Pancreas (tissue), 10 donors: ENCODE measurements at regions of chr12 and their contacts with region 1.

Region 1: DNA sequence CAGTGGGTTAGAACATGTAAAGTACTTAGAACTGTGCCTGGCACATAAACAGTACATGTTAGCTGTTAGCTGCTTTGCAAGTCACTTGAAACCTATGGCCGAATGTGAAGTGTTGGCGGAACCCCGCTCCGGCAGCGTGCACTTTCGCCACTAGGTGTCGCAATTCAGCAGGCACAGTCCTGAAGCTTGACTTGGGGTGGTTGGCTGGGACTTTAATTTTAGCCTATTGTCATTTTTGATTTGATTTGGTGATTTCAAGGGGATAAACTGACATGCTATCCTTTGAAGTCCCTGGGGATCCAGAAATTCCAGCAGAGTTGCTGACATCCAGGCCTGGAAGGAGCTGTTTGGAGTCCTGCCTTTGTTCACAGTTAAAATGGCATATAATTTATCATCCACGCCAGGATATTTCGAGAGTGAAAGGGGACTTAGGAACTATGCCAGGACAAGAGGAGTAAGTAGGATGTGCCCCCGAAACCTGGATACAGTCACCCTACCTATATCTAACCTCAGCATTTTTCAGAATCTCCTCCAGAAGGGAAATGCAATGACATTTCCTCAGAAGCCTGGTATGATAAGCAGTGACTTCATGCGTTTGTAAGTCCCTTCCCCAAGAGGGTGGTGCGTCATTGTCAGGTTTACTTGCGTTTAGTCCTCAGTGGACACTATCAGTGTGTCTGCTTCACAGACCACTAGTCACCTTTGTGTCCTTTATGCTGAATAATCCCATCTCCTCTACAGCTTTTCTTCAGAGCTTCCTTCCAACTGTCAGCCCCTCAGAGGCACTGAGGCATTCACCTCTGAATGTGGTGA is 3.5 kb upstream of the TSPAN9 start:
- DNase-seq: peak; percentile 71 to 96 (median 87)
- ATAC-seq: peak; percentile 22 to 59 (median 51)
- H3K4me3 ChIP-seq: no peak overlapping the region
- H3K27ac ChIP-seq: no peak overlapping the region
- H3K4me1 ChIP-seq: peaks cover 0 to 10% (median 5%) of the 10 kb centered on the region in 3 donors
- H3K27me3 ChIP-seq: no peaks in the 10 kb centered on the region
- CTCF ChIP-seq: peak; percentile 97 to 99 (median 98)

Region 2: DNA sequence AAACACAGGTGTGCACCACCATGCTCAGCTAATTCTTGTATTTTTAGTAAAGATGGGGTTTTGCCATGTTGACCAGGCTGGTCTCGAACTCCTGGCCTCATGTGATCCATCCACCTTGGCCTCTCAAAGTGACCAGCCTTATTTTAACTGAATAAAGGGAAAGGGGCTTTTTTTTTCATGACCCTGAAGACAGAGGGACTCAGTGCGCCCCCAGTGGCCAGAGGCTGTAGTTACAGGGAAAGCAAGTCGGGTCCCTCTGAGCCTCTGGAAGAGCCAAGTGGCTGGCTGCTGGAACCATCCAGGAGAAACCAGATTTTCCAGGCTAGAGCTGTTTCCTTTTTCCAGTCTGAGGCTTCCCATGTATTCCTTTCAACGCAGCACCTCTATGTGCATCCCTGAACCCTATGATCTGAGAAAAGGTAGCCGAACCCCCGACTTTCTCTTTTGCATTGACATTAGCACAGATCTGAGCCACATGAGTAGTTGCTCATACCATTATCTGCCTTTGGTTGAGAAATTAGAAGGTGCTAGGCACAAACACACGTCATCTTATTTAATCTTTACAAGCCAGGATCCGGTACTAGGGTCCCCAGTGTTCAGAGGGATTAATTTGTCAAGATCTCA is 678.2 kb before region 1 on chr12:
- intact Hi-C with region 1: no loop called
- DNase-seq: peak in 3 of 6 donors; percentile 24 to 77 (median 44)
- ATAC-seq: peak in 3 of 4 donors; percentile 49 to 79 (median 66)
- H3K4me3 ChIP-seq: no peak overlapping the region
- H3K27ac ChIP-seq: no peak overlapping the region
- H3K4me1 ChIP-seq: no peaks in the 10 kb centered on the region
- H3K27me3 ChIP-seq: no peaks in the 10 kb centered on the region
- CTCF ChIP-seq: peak; percentile 51 to 72 (median 62)

Region 3: DNA sequence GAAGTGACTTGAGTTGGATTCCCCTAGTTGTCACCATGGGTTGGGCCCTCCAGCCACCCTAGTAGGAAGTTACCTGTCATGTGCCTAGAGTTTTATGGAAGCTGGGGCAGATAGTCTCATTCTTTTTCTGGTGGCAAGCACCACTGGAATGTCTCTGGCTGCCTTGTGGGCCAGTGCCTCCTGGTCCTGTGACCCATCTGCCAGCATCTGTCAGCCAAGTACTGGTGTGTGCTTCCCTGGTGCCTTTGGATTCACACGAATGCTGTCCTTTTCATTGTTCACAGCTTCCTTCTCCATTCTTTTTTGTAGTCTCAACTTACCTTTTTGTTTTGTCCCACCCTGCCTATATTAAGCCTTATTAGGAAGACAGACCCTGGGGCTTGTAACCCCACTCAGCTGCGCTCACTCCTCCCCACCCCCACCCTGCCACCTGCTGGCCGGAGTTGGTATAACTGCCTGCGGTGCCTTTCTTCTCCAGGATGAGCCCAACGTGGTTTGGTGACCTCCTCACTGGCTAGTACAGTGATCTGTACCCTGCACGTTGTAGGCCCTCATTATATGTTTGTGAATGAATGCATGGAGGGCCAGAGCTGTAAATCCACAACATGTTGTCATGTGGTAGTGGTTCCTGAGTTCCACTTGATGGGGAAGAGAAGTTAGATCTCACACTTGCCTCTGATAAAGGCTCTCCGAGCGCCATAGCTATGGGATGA is 129.2 kb after region 1 on chr12:
- intact Hi-C with region 1: loop called in 1 of 3 experiments (anchors 10 kb)
- DNase-seq: peak in 4 of 6 donors; percentile 56 to 90 (median 62)
- ATAC-seq: peak in 3 of 4 donors; percentile 38 to 51 (median 46)
- H3K4me3 ChIP-seq: no peak overlapping the region
- H3K27ac ChIP-seq: no peak overlapping the region
- H3K4me1 ChIP-seq: peaks cover 5 to 17% (median 12%) of the 10 kb centered on the region in 3 donors
- H3K27me3 ChIP-seq: no peaks in the 10 kb centered on the region
- CTCF ChIP-seq: peak; percentile 57 to 90 (median 86)

Region 4: GRCh38 chr12:3275171-3276041 is 201.8 kb after region 1 on chr12:
- intact Hi-C with region 1: loop called in 2 of 3 experiments (anchors 5 to 10 kb)
- DNase-seq: peak in 5 of 6 donors; percentile 35 to 95 (median 77)
- ATAC-seq: peak; percentile 72 to 91 (median 89)
- H3K4me3 ChIP-seq: no peak overlapping the region
- H3K27ac ChIP-seq: no peak overlapping the region
- H3K4me1 ChIP-seq: no peaks in the 10 kb centered on the region
- H3K27me3 ChIP-seq: no peaks in the 10 kb centered on the region
- CTCF ChIP-seq: peak; percentile 95 to 99 (median 98)